CD4-positive, alpha-beta T cell (primary cell): ENCODE measurements at regions of chr21 and their contacts with region 1.

Region 1: DNA sequence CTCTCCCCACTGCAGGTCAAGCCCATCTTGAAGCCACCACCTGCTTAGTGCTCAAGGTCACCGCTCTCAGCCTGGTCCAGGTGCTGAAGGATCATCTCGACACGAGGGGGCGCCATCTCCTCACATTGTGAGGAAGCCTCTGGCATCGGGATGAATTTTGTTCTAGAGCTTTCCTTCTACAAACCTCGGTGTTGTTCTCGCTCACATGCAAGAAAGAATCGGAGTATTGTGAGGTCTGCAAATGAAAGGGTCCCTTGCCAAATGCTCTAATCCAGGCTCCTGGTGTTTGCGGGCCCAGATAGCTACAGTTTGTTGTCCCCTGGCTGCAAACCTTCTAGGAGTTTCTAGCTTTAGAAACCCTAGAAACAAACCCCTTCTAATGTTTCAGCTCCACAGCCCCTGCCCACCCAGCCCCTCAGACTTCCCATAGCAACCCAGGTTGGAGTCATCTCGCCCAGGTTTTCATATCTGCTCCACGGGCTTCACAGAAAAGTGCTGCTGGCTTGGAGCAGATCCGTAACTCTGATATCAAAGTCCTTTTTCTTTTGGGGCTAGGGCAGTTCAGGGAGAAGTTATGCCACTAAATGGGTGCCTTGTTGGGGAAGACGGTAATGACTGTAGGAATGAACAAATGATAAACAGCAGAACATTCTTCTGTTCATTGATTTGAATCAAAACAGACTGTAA is 8.6 kb upstream of the ATP5PO start:
- DNase-seq: peak; percentile 82 to 98 (median 91)
- ATAC-seq: peak; percentile 96
- H3K4me3 ChIP-seq: no peak overlapping the region
- H3K4me3 Mint-ChIP-seq: no peak overlapping the region
- H3K27ac ChIP-seq: no peak overlapping the region
- H3K27ac Mint-ChIP-seq: peak overlapping the region; percentile 61
- H3K4me1 ChIP-seq: peaks cover 11% of the 10 kb centered on the region
- H3K4me1 Mint-ChIP-seq: peaks cover 12% of the 10 kb centered on the region
- H3K27me3 ChIP-seq: no peaks in the 10 kb centered on the region
- H3K27me3 Mint-ChIP-seq: no peaks in the 10 kb centered on the region
- CTCF ChIP-seq: peak; percentile 88

Region 2: DNA sequence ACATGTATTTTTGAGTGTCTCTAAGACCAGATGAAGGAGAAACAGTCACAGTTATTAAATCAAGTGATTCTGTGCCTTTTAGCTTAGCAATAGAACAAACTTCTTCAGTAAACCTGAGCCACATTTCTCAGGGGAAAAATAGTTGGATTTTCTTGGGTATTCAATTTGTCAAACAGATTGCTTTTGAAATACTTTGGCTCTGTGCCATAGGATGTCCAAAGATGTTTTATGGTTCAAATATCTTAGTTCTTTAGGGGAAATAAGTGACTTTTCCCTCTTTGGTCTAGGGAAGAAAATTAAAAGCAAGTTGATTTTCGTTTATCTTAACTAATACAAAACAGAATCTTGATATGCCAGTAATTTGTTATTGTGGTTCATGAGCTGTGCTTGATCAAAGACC is 134.5 kb before region 1 on chr21:
- CTCF ChIA-PET with region 1: no interaction called
- POLR2A ChIA-PET with region 1: no interaction called
- intact Hi-C with region 1: no loop called
- DNase-seq: no peak
- ATAC-seq: no peak
- H3K4me3 ChIP-seq: no peak overlapping the region
- H3K4me3 Mint-ChIP-seq: no peak overlapping the region
- H3K27ac ChIP-seq: no peak overlapping the region
- H3K27ac Mint-ChIP-seq: no peak overlapping the region
- H3K4me1 ChIP-seq: no peaks in the 10 kb centered on the region
- H3K4me1 Mint-ChIP-seq: no peaks in the 10 kb centered on the region
- H3K27me3 ChIP-seq: no peaks in the 10 kb centered on the region
- H3K27me3 Mint-ChIP-seq: no peaks in the 10 kb centered on the region
- CTCF ChIP-seq: no peak

Region 3: GRCh38 chr21:33964706-33965325 is 40.6 kb after region 1 on chr21:
- CTCF ChIA-PET with region 1: interaction called, 16 read pairs
- POLR2A ChIA-PET with region 1: interaction called, 4 read pairs
- intact Hi-C with region 1: no loop called
- DNase-seq: no peak
- ATAC-seq: no peak
- H3K4me3 ChIP-seq: no peak overlapping the region
- H3K4me3 Mint-ChIP-seq: no peak overlapping the region
- H3K27ac ChIP-seq: no peak overlapping the region
- H3K27ac Mint-ChIP-seq: no peak overlapping the region
- H3K4me1 ChIP-seq: peaks cover 6% of the 10 kb centered on the region
- H3K4me1 Mint-ChIP-seq: peaks cover 33% of the 10 kb centered on the region
- H3K27me3 ChIP-seq: no peaks in the 10 kb centered on the region
- H3K27me3 Mint-ChIP-seq: no peaks in the 10 kb centered on the region
- CTCF ChIP-seq: no peak

Region 4: DNA sequence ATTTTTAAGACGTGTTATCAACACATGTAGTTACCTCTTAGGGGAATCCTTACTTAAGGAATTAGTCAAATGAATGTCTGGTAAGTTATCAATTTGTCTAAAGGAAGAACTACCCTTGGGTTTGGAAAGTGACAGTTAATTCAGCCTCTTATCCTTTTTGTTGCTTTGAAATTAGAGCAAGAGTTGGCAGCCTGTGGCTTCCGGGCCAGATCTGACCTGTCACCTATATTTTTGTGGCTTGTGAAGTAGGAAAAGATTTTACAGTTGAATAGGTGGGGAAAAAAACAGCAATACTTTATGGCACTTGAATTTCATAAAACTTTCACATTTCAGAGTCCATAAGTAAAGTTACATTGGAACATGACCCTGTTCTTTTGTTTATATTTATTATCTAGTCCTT is 154.7 kb after region 1 on chr21:
- CTCF ChIA-PET with region 1: interaction called, 34 read pairs
- POLR2A ChIA-PET with region 1: interaction called, 14 read pairs
- intact Hi-C with region 1: loop called (anchors 2 to 5 kb)
- DNase-seq: peak in 5 of 14 experiments; percentile 10 to 61 (median 39)
- ATAC-seq: peak; percentile 30
- H3K4me3 ChIP-seq: no peak overlapping the region
- H3K4me3 Mint-ChIP-seq: peak overlapping the region; percentile 60
- H3K27ac ChIP-seq: no peak overlapping the region
- H3K27ac Mint-ChIP-seq: peak overlapping the region; percentile 48
- H3K4me1 ChIP-seq: peaks cover 43% of the 10 kb centered on the region
- H3K4me1 Mint-ChIP-seq: peaks cover 97% of the 10 kb centered on the region
- H3K27me3 ChIP-seq: no peaks in the 10 kb centered on the region
- H3K27me3 Mint-ChIP-seq: no peaks in the 10 kb centered on the region
- CTCF ChIP-seq: no peak

Region 5: GRCh38 chr21:34129039-34129891 is 205.0 kb after region 1 on chr21:
- CTCF ChIA-PET with region 1: interaction called, 20 read pairs
- POLR2A ChIA-PET with region 1: interaction called, 8 read pairs
- intact Hi-C with region 1: loop called in 1 of 2 experiments (anchors 2 kb)
- DNase-seq: peak; percentile 31 to 86 (median 56)
- ATAC-seq: peak; percentile 89
- H3K4me3 ChIP-seq: peak overlapping the region; percentile 9
- H3K4me3 Mint-ChIP-seq: peak overlapping the region; percentile 71
- H3K27ac ChIP-seq: peak overlapping the region; percentile 31 to 54
- H3K27ac Mint-ChIP-seq: peak overlapping the region; percentile 91
- H3K4me1 ChIP-seq: peaks cover 62% of the 10 kb centered on the region
- H3K4me1 Mint-ChIP-seq: peaks cover 94% of the 10 kb centered on the region
- H3K27me3 ChIP-seq: no peaks in the 10 kb centered on the region
- H3K27me3 Mint-ChIP-seq: no peaks in the 10 kb centered on the region
- CTCF ChIP-seq: peak; percentile 40

Region 6: GRCh38 chr21:34345091-34345871 is 421.1 kb after region 1 on chr21:
- CTCF ChIA-PET with region 1: interaction called, 92 read pairs
- POLR2A ChIA-PET with region 1: interaction called, 53 read pairs
- intact Hi-C with region 1: loop called (anchors 1 kb)
- DNase-seq: no peak
- ATAC-seq: no peak
- H3K4me3 ChIP-seq: no peak overlapping the region
- H3K4me3 Mint-ChIP-seq: no peak overlapping the region
- H3K27ac ChIP-seq: no peak overlapping the region
- H3K27ac Mint-ChIP-seq: no peak overlapping the region
- H3K4me1 ChIP-seq: peaks cover 4% of the 10 kb centered on the region
- H3K4me1 Mint-ChIP-seq: peaks cover 4% of the 10 kb centered on the region
- H3K27me3 ChIP-seq: peaks cover 0 to 2% of the 10 kb centered on the region in 2 experiments
- H3K27me3 Mint-ChIP-seq: no peaks in the 10 kb centered on the region
- CTCF ChIP-seq: no peak